ENCODE measurements at regions of chr2 and their contacts with region 1.

Region 1: DNA sequence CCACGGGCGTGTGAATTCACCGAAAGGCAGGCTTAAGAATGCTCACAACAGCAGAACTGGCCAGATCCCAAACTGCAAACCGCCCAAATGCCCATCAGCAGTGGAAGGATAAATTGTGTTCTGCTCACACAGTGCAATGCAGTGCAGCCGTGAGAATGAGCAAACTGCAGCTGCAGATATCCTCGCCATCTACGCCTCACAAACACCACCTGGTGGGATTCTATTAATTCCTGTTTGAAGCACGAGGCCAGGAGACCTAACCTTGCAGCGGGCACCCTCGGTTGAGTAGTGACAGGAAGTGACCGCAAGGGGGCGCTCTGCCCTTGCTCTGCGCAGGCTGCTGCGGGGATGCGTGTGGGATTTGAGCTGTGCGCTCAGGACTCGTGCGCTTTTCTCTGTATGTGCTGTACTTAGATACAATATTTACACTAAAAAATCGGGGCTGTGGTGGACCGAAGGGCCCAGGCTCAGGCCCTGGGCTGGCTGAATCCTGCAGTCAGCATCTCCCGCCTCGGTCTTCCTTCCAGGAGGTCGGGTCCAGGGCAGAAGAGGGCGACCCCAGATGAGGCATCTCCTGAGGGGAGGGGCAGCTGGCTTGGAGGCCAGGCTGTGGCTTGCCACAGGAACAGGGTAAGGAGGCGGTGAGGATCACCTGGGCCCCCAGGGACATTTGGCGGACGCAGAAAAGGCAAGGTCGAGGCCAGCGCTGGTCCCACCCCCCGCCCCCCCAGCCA is 19.8 kb upstream of the PDIA6 start:
- DNase-seq: peak; percentile 75
- H3K4me3 ChIP-seq: no peak overlapping the region
- H3K27ac ChIP-seq: no peak overlapping the region
- H3K4me1 ChIP-seq: peaks cover 0 to 10% of the 10 kb centered on the region in 2 donors
- H3K27me3 ChIP-seq: no peaks in the 10 kb centered on the region
- CTCF ChIP-seq: peak; percentile 75 to 95 (median 92)
- POLR2A ChIP-seq: no peak

Region 2: DNA sequence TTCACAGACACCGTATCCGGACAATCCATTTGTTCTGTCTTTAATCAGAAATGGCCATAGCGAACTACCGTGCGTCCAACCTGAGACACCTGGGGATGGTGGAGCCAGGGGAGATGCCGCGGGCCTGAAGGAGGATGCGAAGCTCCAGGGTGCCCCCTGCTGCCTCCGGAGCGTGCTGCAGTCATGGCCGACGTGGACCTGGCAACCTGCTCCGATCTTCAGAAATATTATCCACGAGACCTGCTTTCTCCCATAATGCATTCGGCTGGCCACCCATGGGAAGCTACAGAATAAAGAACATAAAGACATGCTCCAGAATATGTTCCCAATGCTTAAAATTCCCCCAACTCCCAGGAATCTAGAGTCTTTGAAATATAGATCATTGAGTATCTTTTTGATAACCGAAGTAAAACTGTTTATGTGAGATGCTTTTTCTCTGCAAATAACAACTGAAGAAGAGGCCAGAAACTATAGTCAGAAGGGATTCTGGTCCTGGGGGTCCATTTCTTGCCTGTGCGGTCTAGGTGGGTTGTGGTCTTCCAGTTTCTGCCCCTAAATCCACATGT is 292.2 kb after region 1 on chr2:
- intact Hi-C with region 1: loop called (anchors 5 kb)
- DNase-seq: peak; percentile 54 to 57
- H3K4me3 ChIP-seq: no peak overlapping the region
- H3K27ac ChIP-seq: no peak overlapping the region
- H3K4me1 ChIP-seq: peaks cover 0 to 2% of the 10 kb centered on the region in 2 donors
- H3K27me3 ChIP-seq: no peaks in the 10 kb centered on the region
- CTCF ChIP-seq: peak in 5 of 6 experiments; percentile 38 to 73 (median 49)
- POLR2A ChIP-seq: no peak

Measured in thyroid gland (tissue), 4 donors.